Activated T-helper 2 cell treated with anti-CD3 and anti-CD28 coated beads, Interferon-gamma antibody, Interleukin-2, Interleukin-4, amounts not matched to agents 10 μg/mL and 5 μg/mL and 100 μg/mL, durations not matched to agents 14 hours and 24 hours and 36 hours (primary cell): ENCODE measurements at regions of chr2 and their contacts with region 1.

Region 1: DNA sequence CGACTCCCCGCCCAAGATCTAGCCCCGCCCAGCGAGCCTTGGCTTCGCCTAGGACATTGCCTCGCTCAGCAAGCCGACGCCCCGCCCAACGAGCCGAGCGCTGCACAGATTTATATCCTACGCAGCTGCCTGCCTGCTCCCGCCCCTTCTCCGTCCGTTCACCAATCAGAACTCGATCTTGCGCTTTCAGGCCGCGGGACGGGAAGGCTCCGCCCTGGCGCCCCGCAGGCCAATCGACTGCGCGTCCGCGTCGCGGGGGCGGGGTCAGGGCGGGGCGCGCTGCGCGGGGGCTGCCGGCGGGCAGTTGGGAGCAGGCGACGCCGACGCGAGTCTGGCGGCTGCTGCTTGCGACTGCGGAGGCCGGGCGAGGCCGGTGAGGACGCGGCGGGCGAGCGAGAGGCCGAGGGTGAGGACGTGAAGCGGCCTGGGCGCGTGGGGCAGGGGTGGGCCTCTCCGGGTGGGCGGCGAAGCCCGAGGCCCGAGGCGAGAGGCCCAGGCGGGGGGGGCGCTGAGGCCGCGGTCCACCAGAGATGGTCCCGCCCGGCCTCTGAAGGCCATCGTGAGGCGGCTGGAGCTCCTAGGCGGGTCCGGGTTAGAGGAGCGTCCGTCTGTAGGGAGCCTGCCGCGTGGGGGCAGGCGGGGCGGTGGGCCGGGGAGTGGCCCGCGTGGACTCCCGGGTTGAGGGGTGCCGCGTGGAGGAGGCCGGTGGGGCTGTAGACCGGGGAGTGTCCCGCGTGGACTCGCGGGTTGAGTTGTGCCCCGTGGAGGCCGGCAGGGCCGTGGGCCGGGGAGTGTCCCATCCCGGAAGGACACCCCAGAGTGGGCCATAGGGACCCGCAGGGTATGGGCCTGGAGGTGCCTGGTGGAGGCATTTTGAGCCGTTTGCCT is at the start of gene FARP2:
- DNase-seq: peak; percentile 95
- H3K4me3 Mint-ChIP-seq: peak within 1 kb of the TSS; percentile 84
- H3K27ac Mint-ChIP-seq: peak within 1 kb of the TSS; percentile 90
- H3K4me1 Mint-ChIP-seq: peaks cover 28% of the 10 kb centered on the region
- H3K27me3 Mint-ChIP-seq: no peaks in the 10 kb centered on the region
- total RNA-seq, gene FARP2: 38.1 and 38.2 TPM in 2 replicates

Region 2: GRCh38 chr2:241149925-241150659 is 206.1 kb before region 1 on chr2 and contains the start of gene PPP1R7:
- intact Hi-C with region 1: loop called (anchors 1 kb)
- DNase-seq: peak; percentile 91
- H3K4me3 Mint-ChIP-seq: peak within 1 kb of the TSS; percentile 96
- H3K27ac Mint-ChIP-seq: peak within 1 kb of the TSS; percentile 90
- H3K4me1 Mint-ChIP-seq: peaks cover 38% of the 10 kb centered on the region
- H3K27me3 Mint-ChIP-seq: no peaks in the 10 kb centered on the region
- total RNA-seq, gene PPP1R7: 101 and 106 TPM in 2 replicates

Region 3: GRCh38 chr2:241188361-241189050 is 167.7 kb before region 1 on chr2 and contains the start of gene ANO7:
- intact Hi-C with region 1: no loop called
- DNase-seq: no peak
- H3K4me3 Mint-ChIP-seq: no peak within 1 kb of the TSS
- H3K27ac Mint-ChIP-seq: no peak within 1 kb of the TSS
- H3K4me1 Mint-ChIP-seq: no peaks in the 10 kb centered on the region
- H3K27me3 Mint-ChIP-seq: no peaks in the 10 kb centered on the region
- total RNA-seq, gene ANO7: 3.5 and 4.3 TPM in 2 replicates

Region 4: GRCh38 chr2:241315093-241315878 is 40.9 kb before region 1 on chr2 and contains the start of gene HDLBP:
- intact Hi-C with region 1: loop called (anchors 1 kb)
- DNase-seq: peak; percentile 100
- H3K4me3 Mint-ChIP-seq: peak within 1 kb of the TSS; percentile 94
- H3K27ac Mint-ChIP-seq: peak within 1 kb of the TSS; percentile 100
- H3K4me1 Mint-ChIP-seq: peaks cover 60% of the 10 kb centered on the region
- H3K27me3 Mint-ChIP-seq: no peaks in the 10 kb centered on the region
- total RNA-seq, gene HDLBP: 282 and 293 TPM in 2 replicates

Region 5: GRCh38 chr2:241421330-241421729 is 65.1 kb after region 1 on chr2:
- intact Hi-C with region 1: no loop called
- DNase-seq: no peak
- H3K4me3 Mint-ChIP-seq: no peak overlapping the region
- H3K27ac Mint-ChIP-seq: no peak overlapping the region
- H3K4me1 Mint-ChIP-seq: no peaks in the 10 kb centered on the region
- H3K27me3 Mint-ChIP-seq: no peaks in the 10 kb centered on the region

Region 6: DNA sequence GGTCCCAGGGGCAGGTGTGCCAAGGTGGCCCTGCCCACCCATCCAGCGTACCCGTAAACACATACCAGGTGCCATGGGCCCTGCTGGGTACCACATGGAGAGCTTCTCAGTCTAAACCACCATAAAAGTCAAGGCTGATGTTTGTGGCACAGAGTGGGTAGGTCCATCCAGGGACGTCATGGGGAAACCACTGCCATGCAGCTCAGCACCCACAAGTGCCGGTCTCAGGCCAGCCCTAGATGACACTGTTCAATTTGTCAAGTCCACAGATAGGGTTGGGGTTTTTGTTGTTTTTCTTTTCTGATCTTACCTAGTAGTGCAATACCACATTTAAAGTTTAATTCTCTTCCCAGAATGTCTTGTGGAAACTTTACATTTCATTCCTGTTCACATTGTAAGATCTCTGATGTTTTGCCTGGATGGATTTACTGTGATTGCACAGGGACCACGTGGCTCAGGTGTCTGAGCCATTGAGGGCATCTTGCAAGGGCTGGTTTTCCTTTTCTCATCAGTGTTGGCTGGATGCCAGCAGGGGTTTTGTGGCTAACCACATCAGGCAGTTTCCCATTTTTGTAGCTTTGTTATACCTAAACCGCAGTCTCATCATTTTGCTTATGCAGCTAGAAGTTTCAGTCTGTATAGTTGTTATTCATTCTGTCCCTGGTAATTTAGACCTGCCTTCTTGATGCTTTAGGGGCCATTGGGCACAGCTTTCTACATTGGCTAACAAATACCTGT is 87.4 kb after region 1 on chr2:
- intact Hi-C with region 1: loop called (anchors 5 kb)
- DNase-seq: peak; percentile 89
- H3K4me3 Mint-ChIP-seq: peak overlapping the region; percentile 19
- H3K27ac Mint-ChIP-seq: peak overlapping the region; percentile 71
- H3K4me1 Mint-ChIP-seq: peaks cover 24% of the 10 kb centered on the region
- H3K27me3 Mint-ChIP-seq: peaks cover 23% of the 10 kb centered on the region

Region 7: GRCh38 chr2:241508240-241509154 is 152.3 kb after region 1 on chr2 and contains the start of gene STK25:
- intact Hi-C with region 1: loop called (anchors 2 kb)
- DNase-seq: peak; percentile 97
- H3K4me3 Mint-ChIP-seq: peak within 1 kb of the TSS; percentile 82
- H3K27ac Mint-ChIP-seq: peak within 1 kb of the TSS; percentile 69
- H3K4me1 Mint-ChIP-seq: peaks cover 17% of the 10 kb centered on the region
- H3K27me3 Mint-ChIP-seq: peaks cover 4% of the 10 kb centered on the region
- total RNA-seq, gene STK25: 116 and 122 TPM in 2 replicates

Region 8: GRCh38 chr2:241609859-241610793 is 253.9 kb after region 1 on chr2:
- intact Hi-C with region 1: loop called (anchors 5 kb)
- DNase-seq: peak; percentile 89
- H3K4me3 Mint-ChIP-seq: peak overlapping the region; percentile 62
- H3K27ac Mint-ChIP-seq: peak overlapping the region; percentile 53
- H3K4me1 Mint-ChIP-seq: peaks cover 17% of the 10 kb centered on the region
- H3K27me3 Mint-ChIP-seq: no peaks in the 10 kb centered on the region

Region 9: DNA sequence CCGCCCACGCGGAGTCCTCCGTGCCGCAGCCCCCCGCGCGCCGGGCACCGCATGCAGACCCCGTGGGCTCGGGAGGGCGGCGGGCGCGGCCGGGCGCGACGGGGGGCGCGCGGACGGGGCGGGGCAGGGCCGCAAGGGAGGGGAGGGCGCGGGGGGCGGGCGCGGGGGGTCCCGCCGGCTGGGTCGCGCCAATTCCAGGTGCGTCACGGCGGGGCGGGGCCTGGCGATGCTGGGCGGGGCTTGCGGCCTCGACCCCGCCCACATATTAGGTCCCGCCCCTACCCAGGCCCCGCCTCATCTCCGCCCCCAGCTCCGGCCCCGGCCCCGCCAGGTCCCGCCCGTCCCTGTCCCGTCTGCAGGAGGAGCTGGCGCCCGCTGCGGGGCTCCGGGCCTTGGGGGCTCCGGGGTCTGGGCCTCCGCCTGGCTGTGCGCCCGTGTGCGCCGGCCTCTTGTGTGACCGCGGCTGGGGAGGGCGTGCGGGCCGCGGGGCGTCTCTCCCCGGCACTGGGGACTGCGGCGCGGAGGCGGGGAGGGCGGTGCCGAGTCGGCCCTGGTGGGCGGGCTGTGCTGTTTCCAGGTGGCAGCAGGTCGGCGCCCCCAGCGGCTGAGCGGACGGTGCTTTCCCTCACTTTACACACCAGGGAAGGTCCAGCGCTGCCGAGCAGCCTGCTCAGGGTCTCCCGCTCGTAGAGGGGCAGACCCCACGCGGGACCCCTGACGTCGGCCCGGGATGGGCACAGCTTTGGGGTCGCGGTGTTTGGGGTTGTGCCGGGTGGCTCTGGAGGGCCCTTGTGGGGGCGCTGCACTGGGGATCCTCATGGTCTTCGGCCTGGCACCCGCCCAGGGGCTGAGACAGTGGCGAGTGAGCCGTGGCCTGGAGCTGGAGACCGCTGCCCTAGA is 346.2 kb after region 1 on chr2:
- intact Hi-C with region 1: loop called (anchors 5 kb)
- DNase-seq: peak; percentile 81
- H3K4me3 Mint-ChIP-seq: peak overlapping the region; percentile 81
- H3K27ac Mint-ChIP-seq: peak overlapping the region; percentile 59
- H3K4me1 Mint-ChIP-seq: peaks cover 13% of the 10 kb centered on the region
- H3K27me3 Mint-ChIP-seq: no peaks in the 10 kb centered on the region